Activated CD4-positive, alpha-beta memory T cell treated with anti-CD3 and anti-CD28 coated beads for 36 hours (primary cell): ENCODE measurements at regions of chr9 and their contacts with region 1.

Region 1: DNA sequence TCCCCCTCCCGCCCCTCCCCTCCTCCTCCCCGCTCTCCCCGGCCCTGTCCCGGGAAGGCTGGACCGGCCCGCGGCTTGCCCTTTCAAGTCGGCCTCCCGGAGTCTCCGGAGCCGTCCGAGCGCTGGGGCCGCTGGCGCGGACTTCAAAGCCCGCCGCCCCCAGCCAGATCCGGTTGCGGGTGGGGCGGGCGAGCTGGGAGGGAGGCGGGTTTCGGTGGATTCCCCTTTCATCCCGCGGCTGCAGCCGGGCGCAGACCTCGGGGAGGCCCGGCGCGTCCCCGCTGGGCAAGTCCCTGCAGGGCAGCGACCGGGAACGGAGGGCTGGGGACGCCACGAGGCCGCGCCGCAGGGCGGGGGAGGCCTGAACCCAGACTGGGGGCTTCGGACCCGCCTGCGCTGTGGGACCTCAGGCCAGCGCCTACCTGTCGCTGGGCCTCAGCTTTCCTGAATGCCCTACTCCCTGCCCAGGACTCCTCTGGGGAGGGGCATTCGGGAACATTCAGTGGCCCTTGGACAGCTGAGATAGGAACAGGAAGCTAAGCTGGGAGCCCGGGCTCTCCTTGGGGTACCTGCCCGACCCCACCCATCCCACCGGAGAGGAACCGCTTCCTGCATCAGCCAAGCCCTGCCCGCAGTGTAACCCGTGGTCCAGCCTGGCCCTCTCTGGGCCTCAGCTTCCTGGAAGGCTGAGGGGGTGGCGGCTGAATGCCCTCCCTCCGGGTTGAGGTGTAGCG is 23.4 kb downstream of the C9orf50 start:
- DNase-seq: peak; percentile 55
- H3K4me3 Mint-ChIP-seq: peak overlapping the region; percentile 23
- H3K27ac Mint-ChIP-seq: no peak overlapping the region
- H3K4me1 Mint-ChIP-seq: peaks cover 14% of the 10 kb centered on the region
- H3K27me3 Mint-ChIP-seq: peaks cover 2% of the 10 kb centered on the region

Region 2: DNA sequence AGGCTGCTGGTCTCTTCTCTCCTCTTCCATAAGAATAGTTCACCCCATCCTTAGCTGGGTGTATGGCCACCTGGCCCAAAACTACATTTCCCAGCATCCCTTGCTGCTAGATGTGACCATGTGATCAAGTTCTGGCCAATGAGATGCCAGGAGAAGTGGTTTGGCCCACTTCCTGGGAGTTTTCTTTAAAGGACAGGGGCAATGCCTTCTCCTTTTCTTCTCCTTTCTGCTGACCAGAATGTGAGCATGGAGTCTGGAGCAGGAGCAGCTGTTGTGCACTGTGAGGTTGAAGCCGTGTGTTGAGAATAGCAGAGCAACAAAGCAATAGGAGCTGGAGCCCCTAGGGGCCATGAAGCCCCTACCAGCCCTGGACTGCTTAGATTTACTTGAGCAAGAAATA is 13.4 kb before region 1 on chr9:
- CTCF ChIA-PET with region 1: no interaction called
- POLR2A ChIA-PET with region 1: interaction called, 12 read pairs
- intact Hi-C with region 1: no loop called
- DNase-seq: peak; percentile 76
- H3K4me3 Mint-ChIP-seq: no peak overlapping the region
- H3K27ac Mint-ChIP-seq: no peak overlapping the region
- H3K4me1 Mint-ChIP-seq: peaks cover 53% of the 10 kb centered on the region
- H3K27me3 Mint-ChIP-seq: no peaks in the 10 kb centered on the region

Region 3: DNA sequence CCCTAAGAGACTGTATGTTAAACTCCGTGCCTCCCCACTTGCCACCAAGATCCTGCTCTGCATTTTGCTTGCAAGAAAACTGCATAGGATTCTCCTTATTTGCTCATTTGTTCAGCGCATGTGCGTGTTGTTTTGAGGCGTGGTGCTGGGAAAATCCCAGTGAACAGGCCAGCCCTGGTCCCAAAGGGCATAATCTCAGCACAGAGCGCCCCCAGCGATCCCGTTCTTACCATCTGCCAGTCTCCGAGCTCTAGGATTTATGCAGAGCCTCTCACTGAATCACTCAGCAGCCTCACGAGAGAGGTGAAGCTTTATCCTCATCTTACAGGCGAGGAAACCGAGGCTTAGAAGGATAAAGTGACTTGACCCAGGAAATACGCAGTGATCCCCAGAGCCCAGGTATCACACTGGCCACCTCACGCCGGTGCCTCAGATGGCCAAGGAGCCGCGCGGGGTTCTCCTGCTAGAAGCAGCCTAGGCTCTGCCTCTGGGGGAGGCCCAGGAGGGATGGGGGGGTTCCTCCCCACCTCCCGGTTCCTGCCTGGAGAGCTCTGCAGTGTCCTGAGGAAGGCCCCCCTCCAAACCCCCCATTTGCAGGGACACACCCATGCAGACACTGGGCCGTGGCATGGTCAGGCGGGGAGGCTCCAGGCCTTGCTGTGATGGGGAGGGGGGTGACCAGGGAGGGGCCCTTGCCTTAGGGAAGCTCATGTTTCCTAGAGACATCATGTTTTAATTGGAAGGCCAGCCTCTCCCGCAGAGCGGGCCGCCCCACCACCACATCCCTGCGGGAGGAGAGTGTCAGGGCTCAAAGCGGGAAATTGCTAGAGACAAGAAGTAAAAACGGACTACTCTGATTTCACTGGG is 79.7 kb after region 1 on chr9:
- CTCF ChIA-PET with region 1: no interaction called
- POLR2A ChIA-PET with region 1: no interaction called
- intact Hi-C with region 1: no loop called
- DNase-seq: no peak
- H3K4me3 Mint-ChIP-seq: no peak overlapping the region
- H3K27ac Mint-ChIP-seq: no peak overlapping the region
- H3K4me1 Mint-ChIP-seq: no peaks in the 10 kb centered on the region
- H3K27me3 Mint-ChIP-seq: peaks cover 18% of the 10 kb centered on the region